ENCODE measurements at regions of chr2 and their contacts with region 1.

Region 1: DNA sequence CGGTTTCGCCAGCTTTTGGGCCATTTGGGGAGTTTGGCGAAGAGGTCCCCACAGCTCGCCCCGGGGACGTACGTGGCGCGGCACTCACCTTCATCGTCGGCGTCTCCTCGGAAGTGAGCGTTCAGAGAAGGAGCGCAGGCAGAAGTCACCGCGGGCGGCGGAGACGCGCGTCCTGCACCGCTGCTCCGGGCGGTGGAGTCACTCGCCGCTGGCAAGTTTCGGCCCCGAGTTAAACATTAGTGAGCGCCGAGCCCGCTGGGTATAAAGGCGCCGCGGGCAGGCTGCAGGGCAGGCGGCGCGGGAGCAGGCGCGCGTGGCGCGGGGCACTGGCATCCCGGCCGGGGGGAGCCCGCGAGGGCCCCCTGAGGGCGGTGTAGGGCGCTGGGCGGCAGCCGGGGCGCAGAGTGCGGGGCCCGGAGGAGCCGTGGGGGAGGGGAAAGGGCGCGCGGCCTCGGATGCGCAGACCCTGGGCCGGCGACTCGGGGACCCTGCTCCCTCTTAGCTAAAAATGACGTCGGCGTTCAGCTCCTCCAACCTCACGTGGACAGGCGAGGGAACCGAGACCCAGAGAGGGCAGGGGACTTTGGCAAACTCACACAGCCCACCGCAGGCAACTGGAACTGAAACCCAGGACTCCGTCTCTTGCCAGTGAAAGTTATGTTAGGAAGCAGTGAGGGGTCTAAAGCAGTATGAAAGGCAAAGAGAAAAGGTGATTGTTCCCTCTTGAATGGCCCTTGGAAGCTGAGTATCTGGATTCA is at the start of gene DPP4:
- DNase-seq: peak; percentile 30 to 73 (median 38)
- ATAC-seq: peak; percentile 27 to 78 (median 64)
- H3K4me3 ChIP-seq: peak within 1 kb of the TSS; percentile 54 to 80 (median 68)
- H3K27ac ChIP-seq: peak within 1 kb of the TSS in 11 of 12 donors; percentile 28 to 78 (median 64)
- H3K4me1 ChIP-seq: peaks cover 4 to 59% (median 34%) of the 10 kb centered on the region in 12 donors
- H3K27me3 ChIP-seq: peaks cover 0 to 4% (median 0%) of the 10 kb centered on the region in 9 donors
- CTCF ChIP-seq: peak in 4 of 12 donors; percentile 6 to 8 (median 7)
- POLR2A ChIP-seq: no peak
- total RNA-seq, gene DPP4: 5.6 to 16.1 (median 8.6) TPM

Region 2: DNA sequence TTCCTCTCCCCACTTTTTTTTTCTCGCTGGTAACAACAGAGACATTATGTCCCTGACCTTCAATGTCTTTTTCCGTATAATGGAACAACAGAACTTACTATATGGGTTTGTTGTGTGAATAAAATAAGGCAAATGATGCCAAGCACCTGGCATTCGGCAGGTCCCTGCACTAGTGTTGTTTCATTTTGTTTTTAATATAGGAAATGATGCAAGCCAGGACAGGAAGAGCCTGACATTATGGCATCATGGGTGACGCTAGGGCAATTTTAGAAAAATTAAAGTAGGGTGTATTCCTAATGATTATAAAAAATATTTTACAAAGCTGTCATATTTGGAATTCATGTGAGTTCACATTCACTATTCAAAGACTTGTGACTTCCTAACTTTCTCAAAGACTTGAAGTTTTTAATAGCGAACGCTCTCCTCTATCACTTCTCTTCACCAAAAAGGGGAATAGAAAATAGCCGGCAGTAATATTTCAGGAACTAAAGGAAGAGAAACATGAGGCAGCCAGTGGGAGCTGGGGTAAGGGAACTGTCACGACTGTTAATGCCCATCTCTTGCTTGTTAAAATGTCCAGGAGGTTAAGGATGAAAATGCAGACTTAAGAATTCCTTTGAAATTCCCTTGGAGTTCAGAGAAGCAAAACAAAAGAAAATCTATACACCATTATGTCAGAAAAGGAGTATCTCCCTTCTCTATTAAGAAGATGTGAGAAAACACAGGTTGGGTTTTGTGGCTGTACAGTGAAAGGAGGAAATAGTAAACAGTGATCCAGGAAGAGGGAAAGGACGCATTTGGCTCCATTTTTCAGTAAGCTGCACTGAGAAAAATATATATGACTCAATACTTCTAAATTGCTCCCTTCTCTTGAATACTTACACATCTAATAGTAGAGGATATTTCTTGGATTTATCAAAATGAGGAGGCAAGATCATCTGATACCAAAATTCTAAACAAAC is 60.3 kb before region 1 on chr2:
- intact Hi-C with region 1: loop called in 3 of 10 experiments (anchors 5 to 10 kb)
- DNase-seq: no peak
- ATAC-seq: peak in 1 of 4 donors; percentile 61
- H3K4me3 ChIP-seq: peak overlapping the region in 5 of 12 donors; percentile 1 to 27 (median 20)
- H3K27ac ChIP-seq: peak overlapping the region in 9 of 12 donors; percentile 0 to 73 (median 9)
- H3K4me1 ChIP-seq: peaks cover 0 to 28% (median 0%) of the 10 kb centered on the region in 12 donors
- H3K27me3 ChIP-seq: no peaks in the 10 kb centered on the region
- CTCF ChIP-seq: no peak
- POLR2A ChIP-seq: no peak

Region 3: DNA sequence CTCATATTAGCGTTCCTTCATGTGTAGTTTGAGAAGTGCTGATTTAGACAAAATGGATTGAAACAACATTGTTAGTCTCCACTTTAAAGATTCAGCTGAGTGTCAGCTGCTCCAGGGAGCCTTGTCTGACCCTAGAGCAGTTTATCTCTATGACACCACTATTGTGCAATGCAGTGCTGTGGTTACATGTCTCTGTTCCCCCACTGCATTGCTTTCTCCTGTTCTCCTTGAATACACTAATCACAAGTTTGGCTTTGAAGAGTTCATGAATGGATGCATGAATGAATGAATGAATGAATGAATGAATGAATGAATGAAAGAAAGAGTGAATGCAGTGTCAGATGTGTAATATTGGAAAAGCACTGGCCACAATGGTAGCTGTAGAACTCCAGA is 39.7 kb after region 1 on chr2:
- intact Hi-C with region 1: loop called in 7 of 10 experiments (anchors 5 to 10 kb)
- DNase-seq: peak in 2 of 5 donors; percentile 29 to 38
- ATAC-seq: peak; percentile 90 to 98 (median 93)
- H3K4me3 ChIP-seq: no peak overlapping the region
- H3K27ac ChIP-seq: peak overlapping the region in 3 of 12 donors; percentile 42 to 49 (median 47)
- H3K4me1 ChIP-seq: peaks cover 0 to 36% (median 19%) of the 10 kb centered on the region in 12 donors
- H3K27me3 ChIP-seq: no peaks in the 10 kb centered on the region
- CTCF ChIP-seq: no peak
- POLR2A ChIP-seq: no peak

Region 4: GRCh38 chr2:162123806-162124758 is 50.0 kb after region 1 on chr2:
- intact Hi-C with region 1: loop called in 6 of 10 experiments (anchors 5 to 10 kb)
- DNase-seq: no peak
- ATAC-seq: peak in 2 of 4 donors; percentile 49 to 55
- H3K4me3 ChIP-seq: no peak overlapping the region
- H3K27ac ChIP-seq: no peak overlapping the region
- H3K4me1 ChIP-seq: peaks cover 0 to 18% (median 0%) of the 10 kb centered on the region in 12 donors
- H3K27me3 ChIP-seq: no peaks in the 10 kb centered on the region
- CTCF ChIP-seq: peak; percentile 74 to 96 (median 86)
- POLR2A ChIP-seq: no peak

Region 5: GRCh38 chr2:163198972-163199371 is 1124.9 kb after region 1 on chr2:
- intact Hi-C with region 1: no loop called
- DNase-seq: no peak
- ATAC-seq: no peak
- H3K4me3 ChIP-seq: no peak overlapping the region
- H3K27ac ChIP-seq: no peak overlapping the region
- H3K4me1 ChIP-seq: no peaks in the 10 kb centered on the region
- H3K27me3 ChIP-seq: no peaks in the 10 kb centered on the region
- CTCF ChIP-seq: no peak
- POLR2A ChIP-seq: no peak

Measured in heart left ventricle (tissue), 16 donors.